Mammary epithelial cell (primary cell): ENCODE measurements at regions of chr1 and their contacts with region 1.

Region 1: DNA sequence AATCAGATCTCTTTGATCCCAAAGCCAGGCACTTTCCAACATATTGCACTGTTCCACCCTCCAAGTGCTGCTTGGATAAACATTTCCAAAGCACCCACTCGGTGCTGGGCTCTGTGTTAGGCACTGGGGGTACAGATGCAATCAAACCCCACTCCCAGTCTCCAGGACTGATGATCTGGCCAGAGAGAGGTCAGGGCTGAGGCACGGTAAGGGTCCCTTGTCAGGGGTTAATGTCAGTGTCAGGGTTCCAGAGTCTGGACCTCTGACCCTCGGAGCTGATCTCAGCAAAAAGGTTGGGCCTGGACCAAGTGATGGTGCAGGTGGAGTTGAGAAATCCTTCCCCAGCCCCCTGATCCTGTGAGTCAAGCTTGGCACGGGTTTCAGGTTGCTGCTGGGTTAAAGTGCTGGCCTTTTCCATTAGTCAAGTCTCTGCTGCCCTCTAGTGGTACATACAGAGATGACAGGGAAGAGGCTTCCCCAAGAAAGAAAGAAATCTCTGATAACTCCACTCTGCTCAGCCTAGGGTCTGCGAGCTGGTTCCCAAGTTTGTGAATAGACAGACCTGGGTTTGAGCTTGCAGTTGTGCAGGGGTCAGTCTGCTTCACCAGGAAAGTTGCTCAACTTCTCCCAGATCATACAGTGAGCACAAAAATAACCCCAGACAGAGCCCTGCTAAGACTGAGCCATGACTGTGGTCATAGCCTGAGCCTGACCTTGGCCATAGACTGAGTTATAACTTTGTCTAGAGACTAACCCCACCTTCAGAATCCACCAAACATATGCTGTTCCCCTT is 74.6 kb downstream of the DMRTA2 start:
- DNase-seq: peak; percentile 59
- H3K4me3 ChIP-seq: no peak overlapping the region
- H3K27ac ChIP-seq: no peak overlapping the region
- H3K4me1 ChIP-seq: no peaks in the 10 kb centered on the region
- H3K27me3 ChIP-seq: no peaks in the 10 kb centered on the region
- CTCF ChIP-seq: peak; percentile 81 to 83

Region 2: DNA sequence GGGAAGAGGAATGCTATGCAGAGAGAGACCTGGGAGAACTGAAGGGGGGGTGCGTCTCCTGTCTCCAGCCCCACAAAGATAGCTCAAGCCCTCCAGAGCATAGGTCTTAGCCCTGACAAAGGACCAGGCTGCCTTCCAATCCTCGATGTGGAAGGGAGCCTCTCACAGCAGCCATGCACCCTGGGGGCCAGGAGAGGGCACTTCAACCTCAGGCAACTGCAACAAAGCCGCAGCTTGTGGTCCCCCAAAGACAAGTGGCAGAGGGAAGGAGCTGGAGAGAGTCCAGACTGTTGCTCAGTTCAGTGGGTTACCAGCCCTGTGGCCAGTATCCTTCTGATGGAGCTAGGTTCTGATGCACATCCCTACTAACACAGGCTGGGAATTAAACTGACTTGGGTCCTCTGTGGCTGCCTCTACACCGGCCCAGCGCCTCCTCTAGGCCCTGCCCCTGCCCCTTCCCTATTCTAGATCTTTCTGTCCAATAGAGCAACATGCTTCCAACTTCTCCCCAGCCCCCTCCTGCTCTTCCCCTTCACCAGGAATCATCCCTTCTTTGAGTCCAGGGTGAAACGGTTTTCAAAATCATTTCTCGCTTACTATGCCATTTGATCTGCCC is 1775.9 kb before region 1 on chr1:
- CTCF ChIA-PET with region 1: no interaction called
- dilution Hi-C with region 1: no loop called
- in situ Hi-C with region 1: no loop called
- intact Hi-C with region 1: loop called (anchors 5 kb)
- DNase-seq: peak; percentile 49
- H3K4me3 ChIP-seq: no peak overlapping the region
- H3K27ac ChIP-seq: no peak overlapping the region
- H3K4me1 ChIP-seq: peaks cover 12% of the 10 kb centered on the region
- H3K27me3 ChIP-seq: no peaks in the 10 kb centered on the region
- CTCF ChIP-seq: peak; percentile 85 to 88

Region 3: GRCh38 chr1:49036700-49037099 is 1311.9 kb before region 1 on chr1:
- CTCF ChIA-PET with region 1: no interaction called
- dilution Hi-C with region 1: no loop called
- in situ Hi-C with region 1: no loop called
- intact Hi-C with region 1: loop called (anchors 1 kb)
- DNase-seq: no peak
- H3K4me3 ChIP-seq: no peak overlapping the region
- H3K27ac ChIP-seq: no peak overlapping the region
- H3K4me1 ChIP-seq: no peaks in the 10 kb centered on the region
- H3K27me3 ChIP-seq: no peaks in the 10 kb centered on the region
- CTCF ChIP-seq: peak in 1 of 2 donors; percentile 34

Region 4: GRCh38 chr1:50271968-50272578 is 76.6 kb before region 1 on chr1:
- CTCF ChIA-PET with region 1: no interaction called
- dilution Hi-C with region 1: no loop called
- in situ Hi-C with region 1: no loop called
- intact Hi-C with region 1: loop called (anchors 5 kb)
- DNase-seq: peak; percentile 12
- H3K4me3 ChIP-seq: no peak overlapping the region
- H3K27ac ChIP-seq: no peak overlapping the region
- H3K4me1 ChIP-seq: no peaks in the 10 kb centered on the region
- H3K27me3 ChIP-seq: no peaks in the 10 kb centered on the region
- CTCF ChIP-seq: peak; percentile 71 to 89

Region 5: DNA sequence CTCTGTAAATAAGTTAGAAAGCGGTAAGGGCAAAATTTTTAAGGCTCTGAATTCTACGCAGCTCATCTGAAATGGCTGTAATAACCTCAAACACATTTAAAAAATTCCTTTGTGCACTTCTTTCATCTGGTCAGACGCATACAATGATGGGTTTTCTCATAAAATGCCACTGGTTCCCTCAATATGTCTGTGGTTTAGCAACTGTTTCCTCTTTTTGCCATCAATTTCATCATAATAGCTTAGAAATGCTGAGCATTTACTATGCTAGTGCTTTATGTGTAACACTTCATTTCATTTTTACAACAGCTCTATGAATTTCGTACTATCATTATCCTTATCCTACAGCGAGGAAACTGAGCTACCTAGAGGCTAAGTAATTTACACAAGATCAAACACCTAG is 109.9 kb after region 1 on chr1:
- CTCF ChIA-PET with region 1: no interaction called
- dilution Hi-C with region 1: no loop called
- in situ Hi-C with region 1: no loop called
- intact Hi-C with region 1: no loop called
- DNase-seq: no peak
- H3K4me3 ChIP-seq: no peak overlapping the region
- H3K27ac ChIP-seq: no peak overlapping the region
- H3K4me1 ChIP-seq: no peaks in the 10 kb centered on the region
- H3K27me3 ChIP-seq: no peaks in the 10 kb centered on the region
- CTCF ChIP-seq: no peak